Ovary (tissue), 10 donors: ENCODE measurements at regions of chr6 and their contacts with region 1.

Region 1: DNA sequence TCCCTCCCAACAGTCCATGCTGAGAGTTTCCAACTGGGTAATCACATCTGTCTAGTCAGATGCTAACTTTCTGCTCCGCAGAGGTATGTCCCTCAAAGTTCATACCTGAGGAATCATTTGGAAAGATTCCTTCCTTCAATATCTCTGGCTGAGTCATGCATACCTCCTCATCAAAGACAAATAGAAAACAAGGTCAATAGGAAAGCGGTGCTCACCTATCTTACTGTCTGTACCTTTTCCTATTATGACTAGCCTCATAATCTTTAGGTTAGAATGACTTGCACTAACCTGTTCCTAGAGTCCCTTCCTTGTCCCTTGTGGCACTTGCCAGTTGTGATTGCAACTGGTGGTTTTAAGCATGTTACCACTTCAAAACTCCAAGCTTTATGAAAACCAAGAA is 78.2 kb upstream of the PTPRK start:
- DNase-seq: no peak
- H3K4me3 ChIP-seq: no peak overlapping the region
- H3K27ac ChIP-seq: no peak overlapping the region
- H3K4me1 ChIP-seq: no peaks in the 10 kb centered on the region
- H3K27me3 ChIP-seq: no peaks in the 10 kb centered on the region
- CTCF ChIP-seq: no peak
- EP300 ChIP-seq: no peak
- POLR2A ChIP-seq: no peak

Region 2: GRCh38 chr6:127120787-127121636 is 1477.6 kb before region 1 on chr6:
- intact Hi-C with region 1: loop called in 1 of 4 experiments (anchors 10 kb)
- DNase-seq: peak in 3 of 5 donors; percentile 55 to 68 (median 61)
- H3K4me3 ChIP-seq: peak overlapping the region; percentile 44
- H3K27ac ChIP-seq: no peak overlapping the region
- H3K4me1 ChIP-seq: peaks cover 5% of the 10 kb centered on the region
- H3K27me3 ChIP-seq: no peaks in the 10 kb centered on the region
- CTCF ChIP-seq: peak in 1 of 3 donors; percentile 31
- EP300 ChIP-seq: no peak
- POLR2A ChIP-seq: no peak

Region 3: DNA sequence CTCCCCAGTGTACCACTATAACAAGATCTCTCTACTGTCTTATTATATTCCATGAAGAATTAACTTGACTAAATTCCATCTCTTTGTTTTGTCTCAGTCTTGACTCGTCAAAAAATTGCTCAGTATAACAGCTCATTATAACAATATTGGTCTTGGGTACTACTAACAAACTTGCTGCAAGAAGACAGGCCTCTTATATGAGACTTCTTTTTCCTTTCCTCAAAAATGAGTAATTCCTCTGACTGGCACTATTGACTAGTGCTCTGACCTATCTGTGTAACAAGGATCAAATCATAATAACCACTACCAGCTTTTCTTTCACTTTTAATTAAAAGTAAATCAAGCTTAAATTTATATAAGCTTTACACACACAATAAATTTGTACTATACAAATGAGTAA is 606.4 kb before region 1 on chr6:
- intact Hi-C with region 1: no loop called
- DNase-seq: no peak
- H3K4me3 ChIP-seq: no peak overlapping the region
- H3K27ac ChIP-seq: no peak overlapping the region
- H3K4me1 ChIP-seq: no peaks in the 10 kb centered on the region
- H3K27me3 ChIP-seq: no peaks in the 10 kb centered on the region
- CTCF ChIP-seq: no peak
- EP300 ChIP-seq: no peak
- POLR2A ChIP-seq: no peak

Region 4: GRCh38 chr6:128725271-128726233 is 127.0 kb after region 1 on chr6:
- intact Hi-C with region 1: no loop called
- DNase-seq: peak in 3 of 5 donors; percentile 23 to 48 (median 28)
- H3K4me3 ChIP-seq: no peak overlapping the region
- H3K27ac ChIP-seq: no peak overlapping the region
- H3K4me1 ChIP-seq: no peaks in the 10 kb centered on the region
- H3K27me3 ChIP-seq: no peaks in the 10 kb centered on the region
- CTCF ChIP-seq: peak in 2 of 3 donors; percentile 60 to 65
- EP300 ChIP-seq: no peak
- POLR2A ChIP-seq: no peak